ENCODE measurements at regions of chr20 and their contacts with region 1.

Region 1: DNA sequence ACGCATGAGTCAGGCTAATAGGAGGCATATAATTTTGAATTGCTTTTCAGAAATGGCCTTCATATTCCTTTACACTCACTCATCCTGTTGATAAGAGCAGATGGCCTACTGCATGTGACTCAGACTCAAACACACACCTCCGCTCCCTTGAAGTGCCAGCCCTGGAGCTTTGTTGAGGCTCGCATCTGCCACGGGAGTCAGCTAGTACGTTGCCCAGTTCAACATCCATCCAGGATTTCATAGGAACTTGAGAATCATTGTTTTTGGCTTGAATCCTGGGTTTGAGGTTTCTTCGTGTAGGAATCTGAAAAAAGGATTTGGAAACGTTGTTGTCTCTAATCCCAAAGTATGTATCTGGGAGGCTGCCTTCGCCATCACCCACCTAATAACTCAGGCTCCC is 87.4 kb upstream of the JAG1 start:
- DNase-seq: no peak
- ATAC-seq: peak; percentile 19
- H3K4me3 ChIP-seq: peak overlapping the region in 1 of 2 donors; percentile 15
- H3K27ac ChIP-seq: peak overlapping the region in 1 of 2 donors; percentile 53
- H3K4me1 ChIP-seq: peaks cover 3 to 4% of the 10 kb centered on the region in 2 donors
- H3K27me3 ChIP-seq: no peaks in the 10 kb centered on the region

Region 2: DNA sequence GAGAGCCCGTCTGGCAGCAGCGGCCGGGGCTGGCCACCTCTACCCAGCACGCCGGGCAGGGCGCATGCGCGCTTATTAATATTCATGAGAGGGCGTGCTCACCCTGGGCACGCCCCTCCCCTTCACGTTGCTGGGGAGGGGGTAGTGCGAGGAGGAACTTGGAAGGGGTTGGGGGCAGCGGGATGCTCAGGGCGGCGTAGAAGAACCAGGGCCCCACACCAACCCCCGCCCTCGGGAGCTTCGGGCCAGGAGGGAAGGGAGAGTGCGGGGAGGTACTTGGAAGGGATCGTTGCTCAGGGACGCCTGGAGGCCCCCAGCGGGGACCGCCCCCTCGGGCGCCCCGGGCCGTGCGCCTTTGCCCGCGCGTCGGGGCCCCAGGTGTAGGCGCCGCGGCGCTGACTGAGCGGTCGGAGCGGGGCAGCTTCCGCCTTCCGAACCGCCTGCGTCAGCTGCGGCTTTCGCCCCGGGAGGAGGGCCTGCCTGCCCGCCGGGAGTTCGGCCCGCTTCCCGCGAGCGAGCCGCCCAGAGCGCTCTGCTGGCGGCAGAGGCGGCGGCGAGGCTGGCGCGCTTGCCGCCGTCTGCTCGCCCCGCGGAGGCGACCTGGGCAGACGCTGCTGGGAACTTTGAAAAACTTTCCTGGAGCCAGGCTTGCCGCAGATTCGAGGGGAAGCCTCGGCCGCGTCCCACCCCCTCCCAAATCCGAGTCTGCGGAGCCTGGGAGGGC is 87.1 kb before region 1 on chr20 and contains the start of gene JAG1:
- intact Hi-C with region 1: no loop called
- DNase-seq: peak; percentile 97 to 98
- ATAC-seq: peak; percentile 90
- H3K4me3 ChIP-seq: peak within 1 kb of the TSS; percentile 93 to 97
- H3K27ac ChIP-seq: peak within 1 kb of the TSS; percentile 95 to 97
- H3K4me1 ChIP-seq: peaks cover 0 to 2% of the 10 kb centered on the region in 2 donors
- H3K27me3 ChIP-seq: no peaks in the 10 kb centered on the region
- total RNA-seq, gene JAG1: 133 to 226 TPM

Region 3: DNA sequence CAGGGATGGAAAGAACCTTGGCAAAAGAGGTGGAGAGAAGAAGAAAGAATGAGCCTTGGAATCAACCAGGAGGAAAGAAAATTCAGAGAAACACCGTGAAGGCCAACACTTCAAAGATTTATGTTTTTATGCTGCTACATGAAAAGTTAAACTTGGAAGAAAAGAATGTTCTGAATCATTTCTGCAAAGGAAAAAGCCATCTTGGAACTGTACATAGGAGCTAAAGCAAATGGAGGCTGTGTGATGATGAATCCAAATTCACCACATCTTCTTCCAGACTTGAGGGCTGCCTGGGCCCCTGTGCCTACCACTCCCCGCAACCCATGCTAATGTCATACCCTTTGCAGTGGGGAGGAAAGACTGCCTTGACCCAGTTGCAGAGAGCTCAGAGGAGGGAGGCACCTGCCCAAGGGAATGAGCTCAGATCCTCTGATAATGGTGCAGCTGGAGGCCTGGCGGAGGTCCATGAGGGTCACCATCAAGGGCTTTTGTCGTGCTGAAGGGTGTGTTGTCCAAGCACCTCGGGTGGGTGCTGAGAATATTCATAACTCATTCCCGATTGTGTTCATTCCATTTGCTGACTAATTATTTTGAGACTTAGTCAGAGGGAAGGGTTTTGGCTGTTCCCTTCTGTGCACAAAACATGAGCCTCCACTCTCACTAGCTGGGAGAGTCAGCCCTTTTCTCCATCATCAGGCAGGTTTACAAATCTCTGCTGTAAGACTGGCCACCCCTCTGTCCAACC is 158.3 kb after region 1 on chr20:
- intact Hi-C with region 1: loop called in 1 of 2 experiments (anchors 10 kb)
- DNase-seq: peak; percentile 79 to 81
- ATAC-seq: peak; percentile 70
- H3K4me3 ChIP-seq: no peak overlapping the region
- H3K27ac ChIP-seq: peak overlapping the region in 1 of 2 donors; percentile 52
- H3K4me1 ChIP-seq: peaks cover 0 to 3% of the 10 kb centered on the region in 2 donors
- H3K27me3 ChIP-seq: no peaks in the 10 kb centered on the region

Measured in aorta (tissue), 5 donors.